ENCODE measurements at regions of chr4 and their contacts with region 1.

Region 1: DNA sequence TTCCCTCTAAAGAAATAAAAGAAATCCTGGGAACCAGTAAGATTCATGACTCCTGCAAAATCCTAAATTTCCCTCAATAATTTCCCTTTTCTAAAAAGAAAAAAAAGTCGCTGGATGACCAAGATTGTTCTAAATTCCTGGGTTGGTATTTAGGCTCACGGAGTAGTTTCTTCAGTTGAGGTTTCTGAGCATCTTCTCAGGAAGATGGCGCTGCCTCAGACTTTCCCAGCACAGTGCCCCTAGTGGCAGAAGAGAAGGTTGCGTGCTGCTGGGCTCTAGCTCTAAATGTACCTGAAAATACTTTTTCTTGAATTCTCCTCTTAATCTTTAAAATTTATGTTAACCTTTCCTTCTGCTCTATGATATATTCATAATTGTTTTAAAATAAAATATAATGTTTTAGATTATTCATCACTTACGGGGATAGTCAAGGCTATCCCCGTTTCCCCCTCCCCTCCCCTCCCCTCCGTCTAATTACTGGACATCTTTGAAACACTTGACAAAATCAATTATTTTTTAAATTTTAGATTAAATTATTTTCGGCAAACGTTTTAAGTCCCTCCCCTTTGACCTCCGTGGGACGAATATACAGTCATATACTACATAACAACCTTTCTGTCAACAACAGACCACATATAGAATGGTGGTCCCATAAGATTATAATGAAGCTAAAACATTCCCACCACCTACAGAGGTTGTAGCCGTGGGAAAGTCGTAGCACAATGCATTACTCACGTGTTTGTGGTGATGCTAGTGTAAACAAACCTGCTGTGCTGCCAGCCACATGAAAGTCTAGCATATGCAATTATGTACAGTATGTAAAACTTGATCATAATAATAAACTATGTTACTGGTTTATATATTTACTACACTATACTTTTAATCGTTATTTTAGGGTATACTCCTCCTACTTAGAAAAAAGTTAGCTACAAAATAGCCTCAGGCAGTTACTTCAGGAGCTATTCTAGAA is 41.0 kb upstream of the GATB start:
- DNase-seq: peak; percentile 59
- H3K4me3 ChIP-seq: no peak overlapping the region; a peak in 1 of 4 replicates
- H3K27ac ChIP-seq: no peak overlapping the region
- H3K4me1 ChIP-seq: peaks cover 0 to 4% of the 10 kb centered on the region in 2 experiments; a peak in 1 of 4 replicates
- H3K27me3 ChIP-seq: no peaks in the 10 kb centered on the region
- CTCF ChIP-seq: peak; percentile 89
- EP300 ChIP-seq: no peak
- RAD21 ChIP-seq: peak; percentile 57

Region 2: DNA sequence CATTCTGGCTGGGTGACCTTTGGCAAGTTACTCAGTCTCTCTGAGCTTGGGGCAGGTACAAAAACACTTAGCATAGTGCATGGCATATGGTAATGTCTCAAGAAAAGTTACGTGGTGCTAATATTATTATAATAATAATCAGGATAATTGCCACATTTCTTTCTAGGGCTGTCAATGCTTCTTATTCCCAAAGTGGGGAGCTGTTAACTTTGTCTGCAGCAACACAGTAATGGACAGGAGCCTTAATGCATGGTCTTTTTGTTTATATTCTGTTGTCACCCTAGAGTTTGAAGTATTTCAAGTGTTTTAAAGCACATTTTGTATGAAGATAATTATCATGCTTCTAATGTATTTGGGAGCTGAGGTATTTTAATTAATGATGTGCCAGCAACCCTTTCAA is 271.0 kb before region 1 on chr4:
- CTCF ChIA-PET with region 1: no interaction called
- POLR2A ChIA-PET with region 1: no interaction called
- DNase-seq: no peak
- H3K4me3 ChIP-seq: no peak overlapping the region
- H3K27ac ChIP-seq: no peak overlapping the region
- H3K4me1 ChIP-seq: no peaks in the 10 kb centered on the region; a peak in 1 of 4 replicates
- H3K27me3 ChIP-seq: no peaks in the 10 kb centered on the region
- CTCF ChIP-seq: no peak
- EP300 ChIP-seq: no peak
- RAD21 ChIP-seq: no peak

Region 3: DNA sequence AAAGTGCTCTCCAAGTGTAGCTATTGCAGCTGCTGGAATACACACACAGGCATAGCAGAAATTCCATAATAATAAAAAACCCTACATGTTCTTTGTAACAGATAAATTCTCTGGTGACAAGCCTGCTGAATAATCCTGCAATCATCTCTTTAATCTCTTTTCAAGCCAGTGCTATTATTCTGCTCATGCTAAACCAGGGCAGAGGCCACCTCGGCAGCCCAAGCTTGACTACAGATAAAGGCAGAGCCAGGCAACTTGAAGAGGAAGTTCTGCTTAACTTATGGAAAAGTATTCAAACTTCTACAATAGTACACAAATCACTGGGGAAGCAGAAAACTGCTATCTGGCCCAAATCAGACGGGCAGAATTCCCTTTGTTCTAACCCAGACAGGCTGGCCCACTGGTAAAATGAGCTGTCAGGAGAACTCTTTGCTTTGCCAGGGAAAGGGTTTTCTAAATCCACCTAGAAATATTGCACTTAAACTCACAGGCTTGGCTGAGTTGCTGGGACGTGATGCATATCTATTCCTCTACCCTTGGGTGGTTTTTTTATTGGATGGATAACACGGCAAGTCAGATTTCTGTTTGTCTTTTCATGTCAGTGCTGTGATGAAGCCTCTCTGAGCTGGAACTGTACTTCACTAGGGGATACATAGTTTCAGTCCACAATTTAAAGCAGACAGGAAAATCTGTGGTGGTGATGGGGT is 111.5 kb before region 1 on chr4:
- CTCF ChIA-PET with region 1: no interaction called
- POLR2A ChIA-PET with region 1: no interaction called
- DNase-seq: peak; percentile 39
- H3K4me3 ChIP-seq: peak overlapping the region in 1 of 2 experiments; percentile 27; a peak in 1 of 4 replicates
- H3K27ac ChIP-seq: peak overlapping the region; percentile 82 to 86
- H3K4me1 ChIP-seq: peaks cover 33 to 57% of the 10 kb centered on the region in 2 experiments
- H3K27me3 ChIP-seq: no peaks in the 10 kb centered on the region
- CTCF ChIP-seq: no peak
- EP300 ChIP-seq: peak; percentile 21 to 44; a peak in 2 of 4 replicates
- RAD21 ChIP-seq: no peak

Region 4: GRCh38 chr4:151781026-151781425 is 20.8 kb before region 1 on chr4:
- CTCF ChIA-PET with region 1: interaction called, 14 read pairs
- POLR2A ChIA-PET with region 1: no interaction called
- DNase-seq: no peak
- H3K4me3 ChIP-seq: no peak overlapping the region
- H3K27ac ChIP-seq: no peak overlapping the region
- H3K4me1 ChIP-seq: peaks cover 0 to 5% of the 10 kb centered on the region in 2 experiments; a peak in 1 of 4 replicates
- H3K27me3 ChIP-seq: no peaks in the 10 kb centered on the region; the same call in 1 of the 2 replicates
- CTCF ChIP-seq: no peak
- EP300 ChIP-seq: no peak
- RAD21 ChIP-seq: no peak

Measured in SK-N-SH (cell line).